CD8-positive, alpha-beta T cell (primary cell): ENCODE measurements at regions of chr1 and their contacts with region 1.

Region 1: GRCh38 chr1:2300851-2301606 is 72.9 kb downstream of the SKI start:
- DNase-seq: peak; percentile 86 to 99 (median 94)
- ATAC-seq: peak; percentile 75
- H3K4me3 ChIP-seq: peak overlapping the region; percentile 62 to 65
- H3K4me3 Mint-ChIP-seq: peak overlapping the region; percentile 82
- H3K27ac ChIP-seq: peak overlapping the region; percentile 99 to 100
- H3K27ac Mint-ChIP-seq: peak overlapping the region; percentile 98
- H3K4me1 ChIP-seq: peaks cover 62% of the 10 kb centered on the region
- H3K4me1 Mint-ChIP-seq: peaks cover 57% of the 10 kb centered on the region
- H3K27me3 ChIP-seq: no peaks in the 10 kb centered on the region
- H3K27me3 Mint-ChIP-seq: no peaks in the 10 kb centered on the region
- CTCF ChIP-seq: no peak

Region 2: DNA sequence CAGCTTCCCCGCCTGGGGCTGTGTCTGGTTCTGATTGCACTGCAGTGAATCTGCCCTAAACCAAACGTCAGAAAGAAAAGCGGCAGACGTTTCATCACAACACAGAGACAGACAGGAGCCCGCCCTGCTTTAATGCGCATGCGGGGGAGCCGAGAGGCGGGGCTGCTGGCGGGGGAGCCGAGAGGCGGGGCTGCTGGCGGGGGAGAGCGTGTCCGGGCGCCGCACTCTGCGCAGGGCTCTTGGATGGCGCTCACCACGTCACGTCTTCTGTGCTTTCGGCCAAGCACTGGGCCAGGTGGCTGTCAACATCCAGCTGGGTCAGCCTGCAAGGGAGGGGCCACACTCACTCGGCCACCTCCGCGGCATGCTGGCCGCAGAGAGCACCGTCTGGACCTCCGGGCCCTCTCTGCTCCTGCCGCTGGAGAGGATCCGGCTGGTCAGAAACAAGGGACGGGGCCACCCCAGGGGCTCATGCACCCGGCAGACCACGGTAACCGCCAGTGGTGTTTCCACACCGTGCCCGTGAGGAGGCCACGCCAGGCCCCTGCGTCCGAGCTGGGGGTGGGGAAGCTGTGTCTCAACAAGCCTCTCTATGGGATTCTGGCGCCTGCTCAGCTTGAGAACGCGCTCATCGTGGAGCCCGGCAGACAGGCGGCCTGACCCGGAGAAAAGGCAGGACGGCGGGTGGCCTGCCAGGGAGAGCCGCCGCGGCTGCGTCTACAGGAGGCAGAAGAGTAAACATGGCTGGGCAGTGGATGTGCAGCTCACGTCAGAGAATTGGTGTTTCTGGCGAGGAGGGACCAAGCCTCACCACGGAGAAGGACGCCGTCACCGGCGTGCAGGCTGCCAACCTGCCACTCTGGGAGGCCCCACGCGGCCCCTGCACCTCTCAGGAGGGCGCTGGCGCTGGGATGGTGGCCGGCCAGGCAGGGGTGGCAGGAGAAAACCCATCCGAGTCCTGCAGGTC is 111.3 kb before region 1 on chr1:
- CTCF ChIA-PET with region 1: interaction called, 6 read pairs
- POLR2A ChIA-PET with region 1: no interaction called
- intact Hi-C with region 1: loop called in 1 of 2 experiments (anchors 1 kb)
- DNase-seq: peak; percentile 83 to 94 (median 90)
- ATAC-seq: peak; percentile 93
- H3K4me3 ChIP-seq: peak overlapping the region; percentile 54 to 61
- H3K4me3 Mint-ChIP-seq: peak overlapping the region; percentile 80
- H3K27ac ChIP-seq: peak overlapping the region; percentile 70 to 77
- H3K27ac Mint-ChIP-seq: peak overlapping the region; percentile 98
- H3K4me1 ChIP-seq: peaks cover 16% of the 10 kb centered on the region
- H3K4me1 Mint-ChIP-seq: peaks cover 17% of the 10 kb centered on the region
- H3K27me3 ChIP-seq: no peaks in the 10 kb centered on the region
- H3K27me3 Mint-ChIP-seq: no peaks in the 10 kb centered on the region
- CTCF ChIP-seq: no peak

Region 3: GRCh38 chr1:2227346-2228153 is 73.5 kb before region 1 on chr1:
- CTCF ChIA-PET with region 1: interaction called, 3 read pairs
- POLR2A ChIA-PET with region 1: interaction called, 27 read pairs
- intact Hi-C with region 1: loop called in 1 of 2 experiments (anchors 2 kb)
- DNase-seq: peak; percentile 88 to 97 (median 91)
- ATAC-seq: peak; percentile 70
- H3K4me3 ChIP-seq: peak overlapping the region in 1 of 2 experiments; percentile 24
- H3K4me3 Mint-ChIP-seq: peak overlapping the region; percentile 68
- H3K27ac ChIP-seq: peak overlapping the region in 1 of 2 experiments; percentile 66
- H3K27ac Mint-ChIP-seq: peak overlapping the region; percentile 74
- H3K4me1 ChIP-seq: peaks cover 24% of the 10 kb centered on the region
- H3K4me1 Mint-ChIP-seq: peaks cover 21% of the 10 kb centered on the region
- H3K27me3 ChIP-seq: no peaks in the 10 kb centered on the region
- H3K27me3 Mint-ChIP-seq: no peaks in the 10 kb centered on the region
- CTCF ChIP-seq: no peak

Region 4: DNA sequence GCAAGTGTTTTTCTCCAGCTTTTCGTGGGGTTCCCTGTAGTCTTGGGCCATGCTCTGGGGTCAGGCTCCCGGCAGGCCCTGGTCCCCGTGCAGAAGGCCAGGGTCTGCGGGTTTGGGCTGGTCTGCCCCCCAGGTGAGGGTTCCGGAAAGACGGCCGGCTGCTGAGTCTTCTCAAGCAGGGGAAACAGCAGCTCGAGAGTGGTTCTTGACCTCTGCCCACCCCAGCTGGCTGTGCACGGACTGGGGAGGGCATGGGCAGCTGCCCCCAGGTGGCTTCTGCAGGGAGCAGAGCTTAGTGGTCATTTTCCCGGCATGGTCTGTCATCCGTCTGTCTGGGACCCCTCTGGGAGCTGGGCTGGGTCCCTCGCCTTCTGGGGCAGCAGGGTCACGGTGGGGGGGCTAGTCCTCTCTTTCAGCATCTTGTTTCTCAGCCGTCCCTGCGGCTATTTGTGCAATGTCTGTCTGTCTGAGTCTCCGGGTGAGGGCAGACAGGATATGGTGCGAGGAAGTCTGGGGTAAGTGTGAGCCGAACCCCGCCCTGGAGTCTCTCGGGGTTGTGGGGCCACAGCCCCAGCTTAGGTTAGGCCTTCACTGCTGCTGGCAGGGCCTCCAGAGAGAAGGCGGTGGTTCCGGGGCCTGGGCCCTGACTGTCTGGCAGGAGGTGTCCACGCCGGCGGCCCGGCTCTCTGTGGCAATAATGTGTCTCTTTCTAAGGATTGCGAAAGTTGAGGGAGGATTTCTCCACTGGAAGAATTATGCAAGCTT is 66.8 kb before region 1 on chr1:
- CTCF ChIA-PET with region 1: interaction called, 5 read pairs
- POLR2A ChIA-PET with region 1: interaction called, 27 read pairs
- intact Hi-C with region 1: no loop called
- DNase-seq: peak; percentile 62 to 94 (median 83)
- ATAC-seq: peak; percentile 55
- H3K4me3 ChIP-seq: peak overlapping the region; percentile 25 to 82
- H3K4me3 Mint-ChIP-seq: peak overlapping the region; percentile 98
- H3K27ac ChIP-seq: peak overlapping the region; percentile 54 to 80
- H3K27ac Mint-ChIP-seq: peak overlapping the region; percentile 98
- H3K4me1 ChIP-seq: peaks cover 83% of the 10 kb centered on the region
- H3K4me1 Mint-ChIP-seq: peaks cover 71% of the 10 kb centered on the region
- H3K27me3 ChIP-seq: no peaks in the 10 kb centered on the region
- H3K27me3 Mint-ChIP-seq: no peaks in the 10 kb centered on the region
- CTCF ChIP-seq: no peak

Region 5: GRCh38 chr1:2279210-2279639 is 21.8 kb before region 1 on chr1:
- CTCF ChIA-PET with region 1: no interaction called
- POLR2A ChIA-PET with region 1: no interaction called
- intact Hi-C with region 1: no loop called
- DNase-seq: peak in 1 of 9 experiments; percentile 45
- ATAC-seq: peak; percentile 16
- H3K4me3 ChIP-seq: no peak overlapping the region
- H3K4me3 Mint-ChIP-seq: peak overlapping the region; percentile 8
- H3K27ac ChIP-seq: no peak overlapping the region
- H3K27ac Mint-ChIP-seq: peak overlapping the region; percentile 69
- H3K4me1 ChIP-seq: peaks cover 55% of the 10 kb centered on the region
- H3K4me1 Mint-ChIP-seq: peaks cover 49% of the 10 kb centered on the region
- H3K27me3 ChIP-seq: no peaks in the 10 kb centered on the region
- H3K27me3 Mint-ChIP-seq: no peaks in the 10 kb centered on the region
- CTCF ChIP-seq: no peak

Region 6: DNA sequence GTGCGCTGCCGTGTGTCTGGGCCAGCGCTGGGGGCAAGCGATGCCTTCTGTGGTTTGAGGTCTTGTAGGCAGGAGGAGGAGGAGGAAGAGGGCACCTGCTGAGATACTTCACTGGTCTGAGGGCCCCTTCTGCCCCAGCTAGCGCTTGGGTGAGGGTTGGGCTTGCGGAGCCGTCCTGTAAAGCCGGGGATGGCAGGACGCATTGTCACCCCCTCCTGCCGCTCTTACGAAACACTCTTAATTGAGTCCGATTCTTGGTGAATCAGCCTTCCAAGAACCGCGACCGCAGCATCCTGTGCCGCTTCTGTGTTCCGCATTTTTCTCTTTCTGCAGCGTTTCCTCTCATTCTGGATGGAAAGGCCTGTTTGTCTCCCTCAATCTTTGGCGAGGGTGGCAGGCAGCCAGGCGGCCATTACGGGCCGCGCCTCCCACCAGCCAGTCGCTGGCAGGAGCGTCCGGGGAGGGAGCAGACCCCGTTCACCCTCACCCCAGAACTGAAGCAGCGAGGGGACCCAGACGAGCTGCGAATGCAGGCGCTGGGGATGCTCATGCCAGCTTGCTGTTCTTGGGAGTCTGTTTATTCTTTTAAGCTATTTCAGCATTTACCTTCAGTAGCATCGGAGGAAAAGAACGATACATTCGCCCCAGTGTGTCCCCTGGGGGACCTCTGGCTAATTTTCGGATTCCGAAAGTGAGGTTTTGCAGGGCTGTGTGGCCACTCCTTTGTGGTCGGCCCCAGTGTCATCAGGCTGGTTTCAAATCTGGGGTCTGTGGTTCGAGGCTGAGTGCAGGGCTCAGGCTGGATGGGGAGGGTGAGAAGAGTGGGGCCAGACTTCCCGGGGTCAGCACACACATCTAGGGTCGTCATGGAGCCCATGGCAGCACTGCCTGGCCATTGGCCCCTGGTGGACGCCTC is 10.2 kb before region 1 on chr1:
- CTCF ChIA-PET with region 1: interaction called, 4 read pairs
- POLR2A ChIA-PET with region 1: interaction called, 22 read pairs
- intact Hi-C with region 1: loop called (anchors 1 kb)
- DNase-seq: peak; percentile 44 to 91 (median 77)
- ATAC-seq: peak; percentile 65
- H3K4me3 ChIP-seq: peak overlapping the region; percentile 50 to 54
- H3K4me3 Mint-ChIP-seq: peak overlapping the region; percentile 80
- H3K27ac ChIP-seq: peak overlapping the region; percentile 58 to 60
- H3K27ac Mint-ChIP-seq: peak overlapping the region; percentile 95
- H3K4me1 ChIP-seq: peaks cover 88% of the 10 kb centered on the region
- H3K4me1 Mint-ChIP-seq: peaks cover 83% of the 10 kb centered on the region
- H3K27me3 ChIP-seq: no peaks in the 10 kb centered on the region
- H3K27me3 Mint-ChIP-seq: no peaks in the 10 kb centered on the region
- CTCF ChIP-seq: no peak

Region 7: DNA sequence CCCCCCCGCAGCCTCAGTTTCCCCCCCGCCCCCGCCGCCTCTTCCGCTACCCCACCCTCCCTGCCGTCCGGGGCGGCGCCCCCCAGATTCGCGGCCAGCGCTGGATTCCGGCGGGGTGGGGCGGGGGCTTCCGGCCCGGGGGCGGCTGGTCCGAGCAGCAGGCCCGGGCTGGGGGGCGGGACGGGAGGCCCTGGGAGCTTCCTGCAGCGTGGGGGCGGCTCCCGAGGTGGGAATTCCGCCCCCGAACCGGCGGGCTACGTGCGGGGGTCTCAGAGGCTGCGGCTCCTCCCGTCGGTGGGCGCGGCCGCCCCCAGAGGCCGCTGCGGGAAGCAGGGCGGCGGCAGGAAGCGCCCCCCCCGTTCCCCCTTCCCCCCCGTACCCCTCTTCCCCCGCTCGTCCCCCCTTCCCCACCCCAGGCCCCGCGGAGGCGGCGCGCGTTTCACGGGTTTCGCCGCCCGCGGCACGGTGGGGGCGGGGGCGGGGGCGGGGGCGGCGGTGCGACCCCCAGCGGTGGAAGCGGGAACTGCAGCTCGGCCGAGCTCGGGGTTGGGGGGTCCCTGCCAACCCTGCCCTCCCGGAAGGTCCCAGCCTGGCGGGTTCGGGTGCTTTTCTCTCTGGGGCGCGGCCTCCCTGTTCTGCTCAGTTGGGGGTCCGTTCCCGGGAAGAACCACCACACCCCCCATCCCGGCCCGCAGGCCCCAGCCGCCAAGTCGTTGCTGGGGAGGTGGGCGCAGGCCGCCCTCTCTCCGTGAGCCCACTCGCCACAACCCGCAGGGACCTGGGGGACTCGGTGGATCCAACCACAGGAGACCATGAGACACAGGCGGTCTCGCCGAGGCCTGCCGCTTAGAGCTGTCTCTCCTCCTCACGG is 14.0 kb after region 1 on chr1:
- CTCF ChIA-PET with region 1: interaction called, 9 read pairs
- POLR2A ChIA-PET with region 1: interaction called, 30 read pairs
- intact Hi-C with region 1: loop called (anchors 1 kb)
- DNase-seq: peak; percentile 52 to 89 (median 73)
- ATAC-seq: peak; percentile 50
- H3K4me3 ChIP-seq: peak overlapping the region; percentile 52 to 58
- H3K4me3 Mint-ChIP-seq: peak overlapping the region; percentile 64
- H3K27ac ChIP-seq: peak overlapping the region; percentile 70 to 82
- H3K27ac Mint-ChIP-seq: peak overlapping the region; percentile 79
- H3K4me1 ChIP-seq: peaks cover 76% of the 10 kb centered on the region
- H3K4me1 Mint-ChIP-seq: peaks cover 33% of the 10 kb centered on the region
- H3K27me3 ChIP-seq: no peaks in the 10 kb centered on the region
- H3K27me3 Mint-ChIP-seq: no peaks in the 10 kb centered on the region
- CTCF ChIP-seq: peak; percentile 97